Heart left ventricle (tissue), 16 donors: ENCODE measurements at regions of chr16 and their contacts with region 1.

Region 1: DNA sequence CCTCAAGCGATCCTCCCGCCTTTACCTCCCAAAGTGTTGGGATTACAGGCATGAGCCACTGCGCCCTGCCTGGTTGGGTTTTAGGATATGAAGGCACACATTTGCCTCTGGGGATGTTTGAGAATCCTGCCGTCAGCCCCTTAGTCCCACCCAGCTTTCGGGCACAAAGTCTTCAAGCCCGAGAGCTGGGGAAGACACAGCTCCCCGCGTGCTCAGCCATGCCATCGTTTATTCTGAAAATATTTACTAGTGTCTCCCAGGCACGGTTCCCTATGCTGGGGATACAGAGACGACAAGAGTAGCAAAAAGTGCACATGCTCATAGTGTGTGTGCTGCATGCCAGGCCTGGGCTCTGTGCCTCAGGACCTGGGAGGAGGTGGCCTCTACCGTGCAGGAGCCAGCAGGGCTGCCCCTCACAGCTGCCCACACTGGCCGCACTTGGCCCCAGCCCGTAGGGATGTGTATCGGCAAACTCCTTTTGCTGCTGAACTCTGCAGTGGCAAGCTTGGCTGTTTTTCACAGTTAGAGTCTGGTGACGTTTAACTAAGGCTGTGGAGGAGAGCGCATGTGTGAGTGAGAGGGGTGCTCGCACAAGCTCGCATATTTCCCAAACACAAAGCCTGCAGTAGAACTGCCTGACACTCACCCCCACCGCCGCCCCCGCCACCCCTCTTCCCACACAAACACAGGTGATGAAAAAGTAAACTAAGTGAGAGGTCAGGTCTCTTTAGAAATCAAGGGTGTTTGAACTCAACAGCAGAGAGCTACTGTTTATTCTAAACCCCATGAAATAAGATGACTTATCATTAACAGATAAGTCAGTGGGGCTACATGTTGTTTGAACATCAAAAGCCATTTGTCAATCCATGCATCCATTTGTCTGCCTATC is 266.4 kb downstream of the MRTFB start:
- DNase-seq: no peak
- ATAC-seq: peak in 3 of 4 donors; percentile 34 to 63 (median 55)
- H3K4me3 ChIP-seq: no peak overlapping the region
- H3K27ac ChIP-seq: no peak overlapping the region
- H3K4me1 ChIP-seq: no peaks in the 10 kb centered on the region
- H3K27me3 ChIP-seq: no peaks in the 10 kb centered on the region
- CTCF ChIP-seq: no peak
- POLR2A ChIP-seq: no peak

Region 2: DNA sequence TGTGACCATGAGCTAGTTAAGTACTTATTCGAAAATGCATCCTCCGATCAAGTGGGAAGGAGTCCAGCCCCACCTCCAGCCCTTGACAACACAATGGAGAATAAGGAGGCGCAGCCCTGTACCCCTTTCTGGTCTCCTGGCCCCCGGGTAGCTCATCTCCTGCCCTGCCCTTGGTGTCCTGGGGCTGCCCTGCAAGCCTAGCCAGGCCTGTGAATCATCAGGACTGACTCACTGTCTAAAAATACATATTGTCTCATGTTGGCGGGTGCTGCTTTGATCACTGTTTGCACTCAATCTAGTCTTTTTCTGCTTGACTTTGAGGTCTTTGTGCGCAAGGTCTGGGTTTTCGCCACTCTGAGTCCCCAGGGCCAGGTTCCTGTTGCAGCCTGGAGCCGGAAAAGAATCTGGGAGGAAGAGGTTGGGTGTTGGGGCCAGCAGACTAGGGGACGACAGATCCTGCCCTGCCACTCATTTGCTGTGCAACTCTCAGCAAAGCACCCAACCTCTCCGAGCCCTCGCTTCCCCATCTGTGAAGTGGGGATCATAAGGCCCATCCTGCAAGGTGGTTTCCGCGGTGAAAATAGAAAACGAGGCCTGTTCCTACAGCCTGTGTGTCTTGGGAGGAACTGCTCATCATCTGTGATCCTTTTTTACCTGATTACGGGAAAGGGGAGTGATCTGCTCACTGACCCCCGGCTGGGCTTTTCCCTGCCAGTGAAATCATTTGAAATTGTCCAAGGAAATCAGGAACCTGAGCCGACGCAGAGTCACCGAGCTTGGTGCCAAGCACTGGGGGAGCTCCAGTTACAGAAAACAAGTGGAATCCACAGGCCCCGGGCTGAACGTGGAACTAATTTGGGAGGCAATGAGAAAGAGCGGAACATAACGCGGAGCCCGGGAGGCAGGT is 62.1 kb after region 1 on chr16:
- intact Hi-C with region 1: loop called in 1 of 10 experiments (anchors 10 kb)
- DNase-seq: peak in 4 of 5 donors; percentile 31 to 65 (median 48)
- ATAC-seq: peak; percentile 92 to 95 (median 94)
- H3K4me3 ChIP-seq: no peak overlapping the region
- H3K27ac ChIP-seq: peak overlapping the region; percentile 55 to 83 (median 72)
- H3K4me1 ChIP-seq: peaks cover 0 to 18% (median 11%) of the 10 kb centered on the region in 12 donors
- H3K27me3 ChIP-seq: no peaks in the 10 kb centered on the region
- CTCF ChIP-seq: no peak
- POLR2A ChIP-seq: no peak

Region 3: DNA sequence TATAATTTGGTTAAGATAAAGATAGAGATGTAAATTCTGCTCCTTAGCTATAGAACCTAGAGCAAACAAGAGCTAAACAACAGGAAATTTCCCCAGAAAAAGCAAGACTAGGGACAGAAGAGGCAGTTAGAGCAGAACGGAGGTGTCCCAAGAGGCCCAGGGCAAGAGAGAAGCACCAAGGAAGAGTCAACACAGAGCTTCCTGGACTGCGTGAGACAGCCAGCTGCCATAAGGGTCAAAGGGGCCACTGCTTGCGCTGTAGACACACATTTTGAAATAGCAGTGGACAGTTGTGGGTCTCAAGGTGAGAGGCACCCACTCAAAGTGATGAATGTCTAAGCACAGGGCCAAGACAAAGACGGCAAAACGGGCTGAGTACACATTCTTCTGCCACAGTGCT is 135.9 kb after region 1 on chr16:
- intact Hi-C with region 1: no loop called
- DNase-seq: no peak
- ATAC-seq: no peak
- H3K4me3 ChIP-seq: no peak overlapping the region
- H3K27ac ChIP-seq: no peak overlapping the region
- H3K4me1 ChIP-seq: no peaks in the 10 kb centered on the region
- H3K27me3 ChIP-seq: no peaks in the 10 kb centered on the region
- CTCF ChIP-seq: no peak
- POLR2A ChIP-seq: no peak